ENCODE measurements at regions of chr7 and their contacts with region 1.

Region 1: GRCh38 chr7:130951303-130951975 is 217.4 kb upstream of the KLF14 start:
- DNase-seq: no peak
- H3K4me3 Mint-ChIP-seq: no peak overlapping the region
- H3K27ac Mint-ChIP-seq: no peak overlapping the region
- H3K4me1 Mint-ChIP-seq: peaks cover 59% of the 10 kb centered on the region
- H3K27me3 Mint-ChIP-seq: no peaks in the 10 kb centered on the region

Region 2: GRCh38 chr7:130966246-130967009 is 15.0 kb after region 1 on chr7:
- CTCF ChIA-PET with region 1: interaction called, 7 read pairs
- POLR2A ChIA-PET with region 1: interaction called, 322 read pairs
- DNase-seq: no peak
- H3K4me3 Mint-ChIP-seq: no peak overlapping the region
- H3K27ac Mint-ChIP-seq: peak overlapping the region; percentile 49
- H3K4me1 Mint-ChIP-seq: peaks cover 73% of the 10 kb centered on the region
- H3K27me3 Mint-ChIP-seq: no peaks in the 10 kb centered on the region